Breast epithelium (tissue), 4 donors: ENCODE measurements at regions of chr1 and their contacts with region 1.

Region 1: DNA sequence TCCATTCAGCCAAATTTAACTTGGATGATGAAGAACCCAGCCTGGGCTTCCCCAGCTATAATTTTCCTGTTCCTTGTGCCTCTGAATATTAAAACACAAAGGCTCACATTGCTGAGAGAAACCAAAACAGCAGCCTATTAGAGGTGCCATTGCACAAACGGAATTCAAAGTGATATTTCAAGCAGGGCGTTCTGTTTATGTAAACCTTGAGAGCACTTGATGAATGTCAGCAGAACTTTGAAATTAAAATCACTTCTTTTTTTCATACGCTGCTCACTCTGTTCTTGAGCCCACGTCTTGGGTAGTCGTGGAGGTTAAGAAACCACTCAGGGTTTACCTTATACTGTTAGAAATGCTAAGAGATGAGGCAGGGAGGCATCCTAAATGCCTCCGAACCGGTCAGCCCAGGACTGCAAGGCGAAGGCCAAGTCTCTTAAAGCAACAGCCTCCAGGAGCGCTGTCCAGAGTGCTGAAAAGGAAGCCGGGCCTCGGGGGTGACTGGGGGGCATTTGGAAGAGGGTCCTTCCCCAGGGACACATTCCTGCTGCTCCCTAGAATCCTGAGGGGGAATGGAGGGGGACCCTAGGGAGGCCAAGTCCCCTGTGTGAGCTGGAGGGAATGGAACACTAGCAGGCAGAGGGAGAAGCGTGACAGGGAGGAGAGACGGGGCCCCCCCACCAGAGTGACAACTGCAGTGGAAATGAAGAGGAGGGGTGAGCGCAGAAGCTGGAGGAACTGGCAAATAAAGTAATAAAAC is 154.8 kb upstream of the VAMP3 start:
- DNase-seq: no peak
- H3K4me3 ChIP-seq: no peak overlapping the region
- H3K27ac ChIP-seq: no peak overlapping the region
- H3K4me1 ChIP-seq: no peaks in the 10 kb centered on the region
- H3K27me3 ChIP-seq: no peaks in the 10 kb centered on the region
- CTCF ChIP-seq: no peak
- POLR2A ChIP-seq: no peak

Region 2: GRCh38 chr1:7069931-7070330 is 546.3 kb before region 1 on chr1:
- intact Hi-C with region 1: loop called (anchors 10 kb)
- DNase-seq: no peak
- H3K4me3 ChIP-seq: peak overlapping the region; percentile 25 to 63 (median 42)
- H3K27ac ChIP-seq: no peak overlapping the region
- H3K4me1 ChIP-seq: no peaks in the 10 kb centered on the region
- H3K27me3 ChIP-seq: no peaks in the 10 kb centered on the region
- CTCF ChIP-seq: no peak
- POLR2A ChIP-seq: no peak